Prostate gland (tissue), 2 donors: ENCODE measurements at regions of chr17 and their contacts with region 1.

Region 1: GRCh38 chr17:43388359-43389045 is 10.3 kb upstream of the ARL4D start:
- DNase-seq: peak; percentile 94
- H3K4me3 ChIP-seq: peak overlapping the region; percentile 44 to 68
- H3K27ac ChIP-seq: peak overlapping the region; percentile 99
- H3K4me1 ChIP-seq: peaks cover 6% of the 10 kb centered on the region
- H3K27me3 ChIP-seq: no peaks in the 10 kb centered on the region
- CTCF ChIP-seq: peak in 1 of 4 experiments; percentile 47
- POLR2A ChIP-seq: peak; percentile 98

Region 2: GRCh38 chr17:43367737-43368242 is 20.7 kb before region 1 on chr17:
- intact Hi-C with region 1: loop called (anchors 1 kb)
- DNase-seq: no peak
- H3K4me3 ChIP-seq: peak overlapping the region in 1 of 2 donors; percentile 52
- H3K27ac ChIP-seq: peak overlapping the region; percentile 100
- H3K4me1 ChIP-seq: no peaks in the 10 kb centered on the region
- H3K27me3 ChIP-seq: no peaks in the 10 kb centered on the region
- CTCF ChIP-seq: no peak
- POLR2A ChIP-seq: no peak

Region 3: DNA sequence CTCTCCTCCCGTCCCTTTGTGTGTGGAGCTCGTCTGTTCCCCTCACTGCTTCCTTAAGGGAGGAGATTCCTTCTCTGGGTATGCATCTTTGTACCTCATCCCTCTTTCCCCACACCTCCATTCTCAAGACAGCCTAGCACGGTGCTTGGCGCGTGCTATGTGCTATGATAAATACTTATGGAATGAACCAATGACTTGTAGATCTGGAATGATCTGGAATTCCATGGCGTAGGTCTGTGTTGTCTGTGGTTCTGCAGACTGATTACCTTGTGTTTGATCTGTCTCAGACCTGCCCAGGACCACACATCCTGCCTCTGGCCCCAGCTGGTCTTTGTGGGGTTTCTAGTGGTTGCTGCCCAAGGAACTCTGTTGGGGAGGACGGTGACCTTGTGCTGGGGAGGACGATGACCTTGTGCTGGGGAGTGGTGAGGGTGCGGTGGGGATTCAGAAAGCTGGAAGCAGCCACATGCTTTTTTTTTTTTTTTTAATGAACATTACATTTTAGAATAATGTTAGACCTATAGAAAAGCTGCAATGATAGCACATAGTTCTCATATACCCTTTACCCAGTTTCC is 191.2 kb after region 1 on chr17:
- intact Hi-C with region 1: no loop called
- DNase-seq: no peak
- H3K4me3 ChIP-seq: no peak overlapping the region
- H3K27ac ChIP-seq: no peak overlapping the region
- H3K4me1 ChIP-seq: no peaks in the 10 kb centered on the region
- H3K27me3 ChIP-seq: no peaks in the 10 kb centered on the region
- CTCF ChIP-seq: no peak
- POLR2A ChIP-seq: no peak